Common myeloid progenitor, CD34-positive (primary cell): ENCODE measurements at regions of chr7 and their contacts with region 1.

Region 1: GRCh38 chr7:106731187-106731586 is 70.2 kb upstream of the CCDC71L start:
- DNase-seq: peak; percentile 67 to 92 (median 91)
- H3K4me3 ChIP-seq: peak overlapping the region in 5 of 7 experiments; percentile 5 to 59 (median 29)
- H3K27ac ChIP-seq: no peak overlapping the region
- H3K4me1 ChIP-seq: peaks cover 14 to 27% (median 21%) of the 10 kb centered on the region in 4 experiments
- H3K27me3 ChIP-seq: no peaks in the 10 kb centered on the region

Region 2: GRCh38 chr7:106239404-106239803 is 491.8 kb before region 1 on chr7:
- CTCF ChIA-PET with region 1: no interaction called
- POLR2A ChIA-PET with region 1: no interaction called
- DNase-seq: no peak
- H3K4me3 ChIP-seq: no peak overlapping the region
- H3K27ac ChIP-seq: no peak overlapping the region
- H3K4me1 ChIP-seq: no peaks in the 10 kb centered on the region
- H3K27me3 ChIP-seq: no peaks in the 10 kb centered on the region

Region 3: GRCh38 chr7:106679153-106679931 is 51.8 kb before region 1 on chr7:
- CTCF ChIA-PET with region 1: interaction called, 14 read pairs
- POLR2A ChIA-PET with region 1: no interaction called
- DNase-seq: peak; percentile 20 to 74 (median 58)
- H3K4me3 ChIP-seq: no peak overlapping the region
- H3K27ac ChIP-seq: peak overlapping the region in 1 of 2 experiments; percentile 36
- H3K4me1 ChIP-seq: peaks cover 0 to 15% (median 3%) of the 10 kb centered on the region in 4 experiments
- H3K27me3 ChIP-seq: no peaks in the 10 kb centered on the region

Region 4: GRCh38 chr7:106717955-106718871 is 13.0 kb before region 1 on chr7:
- CTCF ChIA-PET with region 1: interaction called, 61 read pairs
- POLR2A ChIA-PET with region 1: no interaction called
- DNase-seq: peak; percentile 94 to 99 (median 98)
- H3K4me3 ChIP-seq: peak overlapping the region in 4 of 7 experiments; percentile 10 to 51 (median 48)
- H3K27ac ChIP-seq: peak overlapping the region; percentile 57 to 86
- H3K4me1 ChIP-seq: peaks cover 31 to 62% (median 40%) of the 10 kb centered on the region in 4 experiments
- H3K27me3 ChIP-seq: no peaks in the 10 kb centered on the region